Mammary epithelial cell (primary cell): ENCODE measurements at regions of chrX and their contacts with region 1.

Region 1: GRCh38 chrX:13223868-13224555 is 95.8 kb downstream of the ATXN3L start:
- DNase-seq: peak; percentile 96
- H3K4me3 ChIP-seq: no peak overlapping the region
- H3K27ac ChIP-seq: peak overlapping the region; percentile 44
- H3K4me1 ChIP-seq: peaks cover 34% of the 10 kb centered on the region
- H3K27me3 ChIP-seq: no peaks in the 10 kb centered on the region
- CTCF ChIP-seq: peak; percentile 22 to 35

Region 2: DNA sequence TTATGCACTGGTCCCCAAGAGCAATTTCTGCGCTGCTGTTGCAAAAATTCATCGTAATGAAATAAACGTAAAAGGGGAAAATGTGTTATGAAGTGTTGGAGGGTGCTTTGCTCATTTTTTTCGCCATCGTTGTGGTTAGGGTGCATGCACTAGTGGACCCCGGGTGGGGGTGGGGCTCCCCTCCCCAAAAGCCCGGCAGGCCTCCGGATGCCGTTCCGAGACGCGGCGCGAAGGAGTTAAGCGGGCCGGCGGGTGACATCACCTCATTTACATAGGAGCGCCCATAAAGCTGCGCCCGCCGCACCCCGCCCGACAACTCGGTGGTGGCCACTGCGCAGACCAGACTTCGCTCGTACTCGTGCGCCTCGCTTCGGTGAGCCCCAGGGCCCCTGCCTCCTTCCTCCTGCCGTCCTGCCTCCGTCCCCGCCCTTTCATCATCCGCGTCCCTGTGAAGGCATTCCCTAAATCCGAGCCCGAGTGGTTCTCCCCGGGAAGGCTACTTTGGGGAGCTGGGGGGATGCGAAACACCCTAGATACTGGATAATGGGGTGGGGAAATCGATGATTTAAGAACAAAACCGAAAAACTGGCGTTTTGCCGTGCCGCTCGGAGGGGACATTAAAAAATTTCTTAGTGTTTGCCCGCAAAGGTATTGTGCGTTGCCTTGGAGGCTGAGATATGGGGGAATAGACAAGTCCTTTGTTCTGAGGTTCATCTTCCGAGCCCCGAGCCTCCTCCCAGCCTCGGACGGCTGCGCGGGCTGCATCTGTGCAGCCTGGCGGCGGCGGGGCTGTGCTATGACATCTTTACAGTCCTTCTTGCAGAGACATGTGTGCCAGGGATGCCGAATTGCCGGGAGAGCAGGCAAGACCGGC is 249.0 kb before region 1 on chrX and contains the start of gene TMSB4X:
- CTCF ChIA-PET with region 1: no interaction called
- dilution Hi-C with region 1: no loop called
- in situ Hi-C with region 1: no loop called
- intact Hi-C with region 1: loop called (anchors 2 kb)
- DNase-seq: peak; percentile 76
- H3K4me3 ChIP-seq: peak within 1 kb of the TSS; percentile 79 to 87 (median 80)
- H3K27ac ChIP-seq: peak within 1 kb of the TSS; percentile 93
- H3K4me1 ChIP-seq: peaks cover 7% of the 10 kb centered on the region
- H3K27me3 ChIP-seq: no peaks in the 10 kb centered on the region
- CTCF ChIP-seq: no peak
- total RNA-seq, gene TMSB4X: 1,481 to 1,998 TPM

Region 3: GRCh38 chrX:13005661-13006473 is 218.1 kb before region 1 on chrX:
- CTCF ChIA-PET with region 1: no interaction called
- dilution Hi-C with region 1: no loop called
- in situ Hi-C with region 1: loop called in 1 of 2 experiments (anchors 10 kb)
- intact Hi-C with region 1: no loop called
- DNase-seq: peak; percentile 42
- H3K4me3 ChIP-seq: no peak overlapping the region
- H3K27ac ChIP-seq: no peak overlapping the region
- H3K4me1 ChIP-seq: peaks cover 67% of the 10 kb centered on the region
- H3K27me3 ChIP-seq: no peaks in the 10 kb centered on the region
- CTCF ChIP-seq: no peak

Region 4: GRCh38 chrX:13293700-13294099 is 69.7 kb after region 1 on chrX:
- CTCF ChIA-PET with region 1: no interaction called
- dilution Hi-C with region 1: no loop called
- in situ Hi-C with region 1: no loop called
- intact Hi-C with region 1: loop called (anchors 2 kb)
- DNase-seq: peak; percentile 95
- H3K4me3 ChIP-seq: no peak overlapping the region
- H3K27ac ChIP-seq: peak overlapping the region; percentile 93
- H3K4me1 ChIP-seq: peaks cover 11% of the 10 kb centered on the region
- H3K27me3 ChIP-seq: no peaks in the 10 kb centered on the region
- CTCF ChIP-seq: no peak